GM12878 (cell line): ENCODE measurements at regions of chr1 and their contacts with region 1.

Region 1: GRCh38 chr1:39919545-39919944 is 17.8 kb upstream of the MYCL start:
- DNase-seq: peak; percentile 35
- ATAC-seq: peak; percentile 100
- H3K4me3 ChIP-seq: no peak overlapping the region
- H3K27ac ChIP-seq: no peak overlapping the region
- H3K4me1 ChIP-seq: 0 out of 2 replicates have a peak, but pooled peaks cover 3% of the 10 kb centered on the region
- H3K27me3 ChIP-seq: no peaks in the 10 kb centered on the region
- CTCF ChIP-seq: peak; percentile 70 to 91 (median 72)
- EP300 ChIP-seq: no peak
- POLR2A ChIP-seq: no peak
- RAD21 ChIP-seq: peak; percentile 99

Region 2: DNA sequence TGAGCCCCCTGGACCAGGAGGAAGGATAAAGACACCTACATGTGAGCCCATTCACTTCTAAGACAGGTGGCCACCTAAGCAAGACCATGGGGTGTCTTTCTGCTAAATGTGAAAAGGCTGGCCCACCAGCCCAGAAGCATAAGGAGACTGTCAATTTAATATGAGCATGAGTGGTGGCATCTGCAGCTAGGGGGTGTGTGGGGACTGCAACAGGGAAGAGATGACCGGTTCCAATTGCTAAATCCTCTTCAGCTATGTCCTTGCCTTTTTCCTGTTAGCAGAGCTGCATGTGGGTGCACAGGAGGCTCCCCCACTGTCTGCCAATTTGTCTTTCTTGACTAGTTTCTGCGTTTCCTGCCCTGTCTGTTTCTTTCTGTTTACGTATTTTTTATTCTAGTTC is 450.4 kb before region 1 on chr1:
- CTCF ChIA-PET with region 1: no interaction called
- POLR2A ChIA-PET with region 1: no interaction called
- RAD21 ChIA-PET with region 1: no interaction called
- SMC1A ChIA-PET with region 1: no interaction called
- in situ Hi-C with region 1: no loop called
- intact Hi-C with region 1: no loop called
- DNase-seq: no peak
- ATAC-seq: no peak
- H3K4me3 ChIP-seq: no peak overlapping the region
- H3K27ac ChIP-seq: no peak overlapping the region
- H3K4me1 ChIP-seq: no peaks in the 10 kb centered on the region
- H3K27me3 ChIP-seq: no peaks in the 10 kb centered on the region
- CTCF ChIP-seq: 0 out of 6 replicates have a peak, but pooled peaks of 1 of the 3 experiments have one; percentile 5
- EP300 ChIP-seq: no peak
- POLR2A ChIP-seq: no peak
- RAD21 ChIP-seq: no peak

Region 3: GRCh38 chr1:39907528-39908453 is 11.8 kb before region 1 on chr1:
- CTCF ChIA-PET with region 1: interaction called, 39 read pairs
- POLR2A ChIA-PET with region 1: interaction called, 3 read pairs
- RAD21 ChIA-PET with region 1: interaction called, 3 read pairs
- SMC1A ChIA-PET with region 1: interaction called, 14 read pairs
- in situ Hi-C with region 1: no loop called
- intact Hi-C with region 1: no loop called
- DNase-seq: peak; percentile 30
- ATAC-seq: peak; percentile 49
- H3K4me3 ChIP-seq: no peak overlapping the region
- H3K27ac ChIP-seq: peak overlapping the region; percentile 58
- H3K4me1 ChIP-seq: 0 out of 2 replicates have a peak, but pooled peaks cover 5% of the 10 kb centered on the region
- H3K27me3 ChIP-seq: no peaks in the 10 kb centered on the region; a peak in 1 of 4 replicates
- CTCF ChIP-seq: no peak
- EP300 ChIP-seq: no peak
- POLR2A ChIP-seq: no peak
- RAD21 ChIP-seq: no peak

Region 4: DNA sequence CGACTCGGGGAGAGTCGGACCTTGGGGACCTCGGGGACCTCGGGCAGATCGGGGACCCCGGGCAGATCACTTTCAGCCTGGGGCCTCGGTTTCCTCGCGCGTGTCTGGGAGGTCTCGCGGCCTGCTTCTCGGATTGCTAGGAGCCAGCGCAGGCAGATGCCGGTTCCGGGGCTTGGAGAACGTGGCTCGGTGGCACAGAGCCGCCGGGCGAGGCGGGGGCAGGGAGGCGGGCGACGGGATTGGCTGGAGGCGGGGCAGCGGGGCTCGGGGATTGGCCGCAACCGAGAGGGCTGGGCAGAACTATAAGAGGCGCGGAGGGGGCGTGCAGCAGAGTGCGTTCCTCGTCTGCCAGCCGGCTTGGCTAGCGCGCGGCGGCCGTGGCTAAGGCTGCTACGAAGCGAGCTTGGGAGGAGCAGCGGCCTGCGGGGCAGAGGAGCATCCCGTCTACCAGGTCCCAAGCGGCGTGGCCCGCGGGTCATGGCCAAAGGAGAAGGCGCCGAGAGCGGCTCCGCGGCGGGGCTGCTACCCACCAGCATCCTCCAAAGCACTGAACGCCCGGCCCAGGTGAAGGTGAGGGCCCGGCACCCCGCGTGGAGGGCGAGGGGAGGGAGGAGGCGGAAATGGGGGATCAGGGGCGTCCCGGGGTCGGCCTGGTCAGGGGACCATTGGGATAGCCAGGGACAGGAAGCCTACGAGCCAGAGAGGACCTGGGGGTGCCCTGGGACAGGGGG is 35.4 kb after region 1 on chr1 and contains the start of gene MFSD2A:
- CTCF ChIA-PET with region 1: interaction called, 34 read pairs
- POLR2A ChIA-PET with region 1: no interaction called
- RAD21 ChIA-PET with region 1: interaction called, 23 read pairs
- SMC1A ChIA-PET with region 1: interaction called, 18 read pairs
- in situ Hi-C with region 1: no loop called
- intact Hi-C with region 1: no loop called
- DNase-seq: peak; percentile 55
- ATAC-seq: peak; percentile 93
- H3K4me3 ChIP-seq: peak within 1 kb of the TSS; percentile 89
- H3K27ac ChIP-seq: peak within 1 kb of the TSS; percentile 74
- H3K4me1 ChIP-seq: peaks cover 14% of the 10 kb centered on the region
- H3K27me3 ChIP-seq: no peaks in the 10 kb centered on the region
- CTCF ChIP-seq: no peak
- EP300 ChIP-seq: no peak
- POLR2A ChIP-seq: peak; percentile 96
- RAD21 ChIP-seq: no peak
- polyA plus RNA-seq, gene MFSD2A: 0.84 to 1.9 TPM

Region 5: GRCh38 chr1:39995973-39996393 is 76.4 kb after region 1 on chr1:
- CTCF ChIA-PET with region 1: interaction called, 12 read pairs
- POLR2A ChIA-PET with region 1: no interaction called
- RAD21 ChIA-PET with region 1: interaction called, 11 read pairs
- SMC1A ChIA-PET with region 1: interaction called, 3 read pairs
- in situ Hi-C with region 1: no loop called
- intact Hi-C with region 1: no loop called
- DNase-seq: peak; percentile 52
- ATAC-seq: peak; percentile 99
- H3K4me3 ChIP-seq: no peak overlapping the region
- H3K27ac ChIP-seq: peak overlapping the region; percentile 64
- H3K4me1 ChIP-seq: peaks cover 25% of the 10 kb centered on the region
- H3K27me3 ChIP-seq: no peaks in the 10 kb centered on the region
- CTCF ChIP-seq: 0 out of 6 replicates have a peak, but pooled peaks of 1 of the 3 experiments have one; percentile 11
- EP300 ChIP-seq: 0 out of 4 replicates have a peak, but pooled peaks of 1 of the 2 experiments have one; percentile 62
- POLR2A ChIP-seq: no peak
- RAD21 ChIP-seq: no peak

Region 6: DNA sequence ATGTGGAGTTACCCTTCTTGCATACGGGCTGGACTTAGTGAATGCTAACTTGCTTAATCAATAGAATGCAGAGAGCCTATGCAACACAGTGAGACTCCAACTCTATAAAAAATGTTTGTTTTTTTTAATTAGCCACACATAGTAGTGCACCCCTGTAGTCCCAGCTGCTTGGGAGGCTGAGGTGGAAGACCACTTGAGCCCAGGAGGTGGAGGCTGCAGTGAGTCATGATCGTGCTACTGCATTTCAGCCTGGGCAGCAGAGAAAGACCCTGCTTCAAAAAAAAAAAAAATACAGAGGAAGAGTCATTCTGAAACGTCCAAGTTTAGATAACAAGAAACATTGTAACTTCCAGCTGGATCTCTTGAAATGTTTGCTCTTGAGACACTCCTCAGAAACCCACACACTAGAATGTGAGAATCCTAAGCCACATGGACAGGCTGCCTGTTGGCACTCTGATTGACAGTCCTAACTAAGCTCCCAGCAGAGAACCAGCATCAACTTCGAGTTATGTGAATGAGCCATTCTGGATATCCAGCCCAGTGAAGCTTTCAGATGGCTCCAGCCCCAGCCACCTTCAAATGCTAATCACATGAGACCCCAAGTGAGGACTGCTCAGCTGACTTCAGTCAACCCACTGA is 101.0 kb after region 1 on chr1:
- CTCF ChIA-PET with region 1: interaction called, 14 read pairs
- POLR2A ChIA-PET with region 1: interaction called, 7 read pairs
- RAD21 ChIA-PET with region 1: interaction called, 5 read pairs
- SMC1A ChIA-PET with region 1: interaction called, 3 read pairs
- in situ Hi-C with region 1: no loop called
- intact Hi-C with region 1: no loop called
- DNase-seq: no peak
- ATAC-seq: peak; percentile 31; the same call in 2 of the 3 replicates
- H3K4me3 ChIP-seq: no peak overlapping the region
- H3K27ac ChIP-seq: no peak overlapping the region
- H3K4me1 ChIP-seq: peaks cover 8% of the 10 kb centered on the region
- H3K27me3 ChIP-seq: no peaks in the 10 kb centered on the region
- CTCF ChIP-seq: no peak
- EP300 ChIP-seq: no peak
- POLR2A ChIP-seq: no peak
- RAD21 ChIP-seq: no peak

Region 7: GRCh38 chr1:40078512-40079333 is 159.2 kb after region 1 on chr1:
- CTCF ChIA-PET with region 1: interaction called, 12 read pairs
- POLR2A ChIA-PET with region 1: no interaction called
- RAD21 ChIA-PET with region 1: no interaction called
- SMC1A ChIA-PET with region 1: interaction called, 5 read pairs
- in situ Hi-C with region 1: no loop called
- intact Hi-C with region 1: no loop called
- DNase-seq: no peak
- ATAC-seq: peak; percentile 98
- H3K4me3 ChIP-seq: no peak overlapping the region
- H3K27ac ChIP-seq: no peak overlapping the region
- H3K4me1 ChIP-seq: no peaks in the 10 kb centered on the region
- H3K27me3 ChIP-seq: no peaks in the 10 kb centered on the region
- CTCF ChIP-seq: peak; percentile 74 to 85 (median 75)
- EP300 ChIP-seq: no peak
- POLR2A ChIP-seq: no peak
- RAD21 ChIP-seq: peak; percentile 63